Right ventricle myocardium superior (tissue), 1 donor: ENCODE measurements at regions of chr3 and their contacts with region 1.

Region 1: DNA sequence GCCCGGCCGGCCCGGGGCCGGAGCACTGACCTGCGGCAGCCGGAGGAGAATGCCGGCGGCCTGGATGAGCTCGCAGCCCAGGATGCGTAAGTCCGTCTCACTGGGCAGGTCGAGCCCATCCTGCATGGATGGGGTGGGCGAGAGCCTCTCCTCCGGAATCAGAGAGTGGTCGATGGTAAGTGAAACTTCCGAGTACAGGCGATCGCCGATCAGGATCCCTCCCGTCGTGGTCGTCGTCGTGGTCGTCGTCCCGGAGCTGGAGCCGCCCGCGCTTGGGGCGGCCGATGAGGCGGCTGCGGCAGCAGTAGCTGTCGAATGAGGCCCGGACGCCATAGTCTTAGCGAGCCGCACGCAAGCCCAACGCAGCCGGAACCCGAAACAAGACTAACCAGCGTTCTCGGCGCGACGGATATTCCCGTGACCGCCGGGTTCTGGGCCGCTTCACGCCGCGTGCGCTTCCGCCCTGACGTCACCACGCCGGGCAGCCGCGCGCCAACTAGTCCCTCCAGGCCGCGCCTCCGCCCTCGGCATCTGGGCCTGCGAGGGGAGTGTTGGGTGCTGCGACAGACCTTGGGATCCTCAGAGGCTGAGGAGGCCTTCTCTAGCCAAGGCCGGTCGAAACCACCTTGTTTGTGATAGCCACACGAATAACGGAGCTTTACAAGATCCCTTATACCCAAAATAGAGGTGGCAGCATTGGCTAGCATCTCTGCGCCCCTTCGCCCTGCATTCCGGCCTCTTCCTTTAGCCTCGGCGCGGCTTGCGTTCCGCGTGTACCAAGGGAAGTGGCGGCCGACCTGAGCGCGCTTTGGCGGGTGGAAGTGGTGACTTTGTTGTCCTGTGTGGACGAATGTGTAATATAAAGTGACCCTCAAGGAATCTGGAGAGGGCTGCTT is at the start of gene CCNL1:
- DNase-seq: peak; percentile 98
- ATAC-seq: peak; percentile 97
- total RNA-seq, gene CCNL1: 20.2 TPM

Region 2: GRCh38 chr3:156826144-156826895 is 333.7 kb before region 1 on chr3 and contains the start of gene LEKR1:
- intact Hi-C with region 1: loop called (anchors 10 kb)
- DNase-seq: peak; percentile 94
- ATAC-seq: peak; percentile 99
- total RNA-seq, gene LEKR1: 0.56 TPM

Region 3: DNA sequence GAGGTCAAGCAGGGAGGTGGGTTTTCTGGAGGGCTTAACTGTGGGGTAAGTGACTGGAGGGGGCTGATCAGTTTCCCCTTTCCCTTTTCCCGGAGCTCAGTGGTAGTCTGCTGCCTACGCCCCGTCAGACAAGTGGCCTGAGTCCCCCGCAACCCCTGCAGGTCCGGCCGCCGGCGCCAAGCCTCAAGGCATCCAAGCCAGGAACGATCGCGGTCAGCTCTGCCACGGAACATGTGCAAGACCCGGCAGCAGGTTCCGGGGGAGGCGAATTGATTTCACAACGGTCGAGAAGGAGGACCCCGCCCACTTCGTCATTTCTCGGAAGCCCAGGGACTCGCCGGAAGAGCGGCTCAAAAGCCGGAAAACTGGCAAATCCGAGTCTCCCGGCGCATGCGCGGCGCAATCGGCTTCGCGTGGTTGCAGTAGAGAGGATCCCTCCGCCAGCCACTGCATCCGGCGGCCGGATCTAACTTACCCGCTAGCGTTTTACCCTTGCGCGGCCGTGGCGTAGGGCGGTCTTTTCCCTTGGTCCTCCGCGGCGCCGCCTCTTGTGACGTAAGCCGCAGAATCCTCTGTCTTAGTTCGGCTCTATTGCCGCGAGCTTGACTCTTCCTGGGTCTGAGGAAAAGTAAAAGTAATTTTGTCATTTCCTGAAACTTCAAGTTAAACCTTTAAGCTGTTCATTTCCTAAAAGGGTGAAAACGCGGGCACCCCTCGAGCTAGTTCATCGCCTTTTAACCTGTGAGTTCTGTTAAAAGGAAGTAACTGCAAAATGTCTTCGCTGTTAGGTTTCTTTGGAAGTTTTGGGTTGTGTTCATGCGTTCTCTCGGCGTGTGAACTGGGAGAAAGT is 14.9 kb after region 1 on chr3:
- intact Hi-C with region 1: loop called (anchors 1 kb)
- DNase-seq: peak; percentile 99
- ATAC-seq: peak; percentile 98